ENCODE measurements at regions of chr22 and their contacts with region 1.

Region 1: GRCh38 chr22:41697126-41697775 is 2.1 kb upstream of the MEI1 start:
- DNase-seq: peak; percentile 90
- H3K4me3 ChIP-seq: no peak overlapping the region
- H3K27ac ChIP-seq: no peak overlapping the region
- H3K4me1 ChIP-seq: peaks cover 13% of the 10 kb centered on the region
- CTCF ChIP-seq: peak; percentile 100

Region 2: GRCh38 chr22:41636467-41636866 is 60.8 kb before region 1 on chr22:
- CTCF ChIA-PET with region 1: no interaction called
- POLR2A ChIA-PET with region 1: no interaction called
- intact Hi-C with region 1: no loop called
- DNase-seq: no peak
- H3K4me3 ChIP-seq: no peak overlapping the region
- H3K27ac ChIP-seq: no peak overlapping the region
- H3K4me1 ChIP-seq: no peaks in the 10 kb centered on the region
- CTCF ChIP-seq: no peak

Region 3: GRCh38 chr22:41746567-41747400 is 49.5 kb after region 1 on chr22:
- CTCF ChIA-PET with region 1: interaction called, 5 read pairs
- POLR2A ChIA-PET with region 1: interaction called, 3 read pairs
- intact Hi-C with region 1: loop called (anchors 5 kb)
- DNase-seq: peak; percentile 85
- H3K4me3 ChIP-seq: no peak overlapping the region
- H3K27ac ChIP-seq: peak overlapping the region; percentile 57
- H3K4me1 ChIP-seq: peaks cover 35% of the 10 kb centered on the region
- CTCF ChIP-seq: peak; percentile 85

Region 4: GRCh38 chr22:41800348-41801146 is 103.3 kb after region 1 on chr22 and contains the start of gene CCDC134:
- CTCF ChIA-PET with region 1: interaction called, 4 read pairs
- POLR2A ChIA-PET with region 1: interaction called, 3 read pairs
- intact Hi-C with region 1: loop called (anchors 5 kb)
- DNase-seq: peak; percentile 91
- H3K4me3 ChIP-seq: peak within 1 kb of the TSS; percentile 79
- H3K27ac ChIP-seq: peak within 1 kb of the TSS; percentile 37
- H3K4me1 ChIP-seq: peaks cover 39% of the 10 kb centered on the region
- CTCF ChIP-seq: no peak
- total RNA-seq, gene CCDC134: 21.7 and 23.8 TPM in 2 replicates

Region 5: DNA sequence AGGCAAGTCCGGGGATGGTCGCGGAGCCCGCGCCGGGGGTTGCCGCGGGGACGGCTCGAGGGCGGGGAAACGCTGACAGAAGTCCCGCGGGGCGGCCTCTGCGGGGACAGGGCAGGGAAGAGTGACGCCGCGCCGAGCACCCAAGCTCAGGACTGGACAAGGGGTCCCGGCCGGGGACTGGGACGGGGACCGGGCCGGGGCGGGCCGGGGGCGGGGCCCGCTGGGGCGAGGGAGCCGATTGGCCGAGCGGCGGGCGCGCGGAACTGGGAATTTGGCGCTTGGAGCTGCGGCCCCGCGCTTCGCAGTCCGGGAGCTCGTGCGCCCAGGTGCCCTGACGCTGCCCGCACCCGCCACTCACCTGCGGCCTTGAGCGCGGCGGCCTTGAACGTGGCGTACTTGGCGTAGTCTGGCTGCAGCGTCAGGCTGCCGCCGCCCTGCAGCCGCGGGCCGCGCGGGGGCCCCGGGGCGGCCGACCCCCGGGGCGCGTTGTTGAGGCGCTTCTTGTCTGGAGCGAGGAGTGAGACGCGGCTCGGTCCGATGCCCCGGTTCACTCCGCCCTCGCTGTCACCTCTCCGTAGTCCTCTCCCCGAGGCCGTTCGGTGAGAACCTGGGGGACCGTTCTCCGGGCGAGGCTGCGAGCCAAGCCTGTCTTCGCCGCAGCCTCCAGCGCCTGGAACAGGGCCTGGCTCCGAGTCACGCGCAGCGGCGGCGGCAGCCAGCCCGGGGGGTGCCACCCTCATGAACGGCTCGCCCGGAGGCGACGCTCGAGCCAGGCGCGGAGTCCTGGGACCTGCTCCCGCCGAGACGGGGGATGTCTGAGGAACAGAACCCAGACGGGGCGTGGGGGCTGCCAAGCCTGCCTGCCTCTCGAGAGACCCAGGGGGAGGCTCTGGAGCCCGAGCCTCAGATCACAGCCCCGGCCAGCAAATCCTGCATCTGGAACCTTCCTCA is 213.1 kb after region 1 on chr22:
- CTCF ChIA-PET with region 1: no interaction called
- POLR2A ChIA-PET with region 1: no interaction called
- intact Hi-C with region 1: loop called (anchors 5 kb)
- DNase-seq: no peak
- H3K4me3 ChIP-seq: no peak overlapping the region
- H3K27ac ChIP-seq: no peak overlapping the region
- H3K4me1 ChIP-seq: peaks cover 12% of the 10 kb centered on the region
- CTCF ChIP-seq: no peak

Region 6: DNA sequence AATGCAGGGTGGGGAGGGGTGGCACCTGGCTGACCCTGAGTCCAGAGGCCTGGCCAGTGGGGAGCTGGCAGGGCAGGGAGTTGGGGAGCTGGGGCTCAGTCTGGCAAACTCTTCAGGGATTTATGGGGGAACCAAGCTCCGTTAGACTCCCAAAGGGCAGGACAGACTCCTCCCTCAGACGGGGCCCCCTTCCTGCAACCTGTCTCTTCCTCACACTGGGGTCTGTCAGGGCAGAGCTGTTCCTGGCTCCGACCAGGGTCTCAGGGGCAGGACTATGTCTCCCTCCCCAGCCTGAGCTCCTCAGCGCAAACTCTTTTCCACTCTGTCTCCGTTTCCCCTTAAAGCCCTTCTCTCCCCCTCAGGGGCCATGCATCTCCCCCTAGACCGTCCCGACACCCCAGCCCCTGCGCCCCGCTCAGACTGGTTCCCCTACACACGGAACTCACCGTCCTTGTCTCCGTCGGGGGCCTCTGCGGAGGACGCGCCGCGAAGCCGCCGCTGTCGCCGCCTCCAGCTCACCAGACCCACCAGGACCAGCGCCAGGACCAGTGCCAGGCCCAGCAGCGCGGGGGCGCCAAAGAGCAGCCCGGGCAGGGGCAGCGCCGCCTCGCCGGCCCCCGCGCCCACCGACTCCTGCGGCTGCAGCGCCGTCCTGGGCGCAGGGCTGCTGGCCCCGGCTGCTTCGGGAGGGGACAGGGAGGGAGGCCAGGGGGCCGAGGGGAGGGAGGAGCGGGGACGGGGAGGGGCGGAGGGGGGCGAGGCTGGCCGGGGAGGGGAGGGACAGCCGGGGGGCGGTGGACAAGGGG is 228.6 kb after region 1 on chr22:
- CTCF ChIA-PET with region 1: no interaction called
- POLR2A ChIA-PET with region 1: no interaction called
- intact Hi-C with region 1: no loop called
- DNase-seq: peak; percentile 78
- H3K4me3 ChIP-seq: peak overlapping the region; percentile 68
- H3K27ac ChIP-seq: peak overlapping the region; percentile 76
- H3K4me1 ChIP-seq: peaks cover 95% of the 10 kb centered on the region
- CTCF ChIP-seq: peak; percentile 82

Measured in OCI-LY7 (cell line).